Natural killer cell (primary cell): ENCODE measurements at regions of chr14 and their contacts with region 1.

Region 1: DNA sequence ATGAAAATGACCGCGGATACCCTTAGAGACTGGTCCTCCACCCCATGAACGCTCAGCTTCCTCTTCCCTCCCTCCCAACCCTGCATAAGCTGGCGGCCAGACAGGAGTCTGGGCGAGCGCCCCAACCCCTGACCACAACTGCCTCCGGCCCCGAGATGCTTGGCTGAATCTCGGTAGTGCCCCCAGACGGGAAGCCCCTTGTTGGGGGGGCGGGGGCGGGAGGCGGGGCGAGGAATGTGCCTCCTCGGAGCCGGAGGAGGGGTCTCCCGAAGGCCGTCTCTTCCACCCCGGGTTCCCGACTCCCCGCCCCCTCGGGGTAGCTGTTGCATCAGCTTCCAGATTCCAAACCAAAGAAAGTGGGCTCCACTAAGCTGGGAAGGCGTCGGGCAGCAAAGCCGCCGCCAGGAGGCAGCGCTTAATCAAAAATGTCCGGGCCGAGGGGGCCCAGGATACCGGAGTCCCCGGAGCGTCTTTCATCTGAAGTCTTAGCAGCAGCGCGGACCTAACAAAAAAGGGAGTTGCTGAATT is 7.1 kb upstream of the MRPL52 start:
- DNase-seq: peak; percentile 52 to 85
- ATAC-seq: peak; percentile 81 to 90 (median 87)
- H3K4me3 ChIP-seq: peak overlapping the region; percentile 21
- H3K4me3 Mint-ChIP-seq: peak overlapping the region; percentile 59
- H3K27ac ChIP-seq: peak overlapping the region; percentile 32
- H3K27ac Mint-ChIP-seq: no peak overlapping the region
- H3K4me1 ChIP-seq: peaks cover 17% of the 10 kb centered on the region
- H3K4me1 Mint-ChIP-seq: peaks cover 7 to 14% of the 10 kb centered on the region in 2 donors
- H3K27me3 ChIP-seq: peaks cover 9% of the 10 kb centered on the region
- H3K27me3 Mint-ChIP-seq: peaks cover 32 to 47% of the 10 kb centered on the region in 2 donors
- CTCF ChIP-seq: peak; percentile 72

Region 2: DNA sequence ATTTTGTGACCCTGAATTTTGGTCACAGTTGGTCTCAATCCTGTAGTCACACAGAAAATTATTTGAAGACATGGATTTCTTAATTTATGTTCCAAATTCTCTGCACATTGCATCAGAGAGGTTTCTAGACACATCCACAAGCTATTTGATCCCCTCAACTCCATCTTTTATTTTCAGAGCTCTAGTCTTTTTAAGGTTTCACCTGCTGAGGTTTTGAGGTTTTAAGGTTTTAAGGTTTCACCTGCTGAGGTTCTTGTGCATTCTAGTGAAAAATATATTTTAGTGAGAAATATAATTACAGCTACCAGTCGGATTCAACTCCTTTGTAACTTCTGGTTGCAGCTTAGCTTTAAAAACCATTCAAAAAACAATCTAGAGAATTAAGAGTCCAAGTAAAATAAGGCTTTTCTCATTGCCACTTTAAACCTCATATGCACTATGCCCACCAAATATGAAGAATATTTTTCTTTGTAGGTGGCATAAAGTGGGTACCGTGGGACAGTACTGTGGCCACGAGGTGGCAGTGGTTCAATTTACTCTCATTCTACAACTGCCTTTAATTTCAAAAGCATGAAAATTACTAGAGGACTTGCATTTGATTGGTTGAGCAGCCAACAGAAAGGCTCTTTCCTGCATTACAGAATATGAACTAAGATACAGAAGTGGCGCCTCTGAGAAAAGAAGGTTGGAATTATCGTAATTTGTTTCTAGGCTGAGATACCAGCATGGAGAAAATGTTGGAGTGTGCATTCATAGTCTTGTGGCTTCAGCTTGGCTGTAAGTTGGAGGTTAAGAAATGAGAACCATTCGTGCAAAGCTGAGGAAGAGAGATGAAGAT is 782.5 kb before region 1 on chr14:
- intact Hi-C with region 1: no loop called
- DNase-seq: peak in 1 of 2 donors; percentile 71
- ATAC-seq: peak; percentile 34 to 77 (median 68)
- H3K4me3 ChIP-seq: no peak overlapping the region
- H3K4me3 Mint-ChIP-seq: peak overlapping the region; percentile 4
- H3K27ac ChIP-seq: no peak overlapping the region
- H3K27ac Mint-ChIP-seq: no peak overlapping the region
- H3K4me1 ChIP-seq: no peaks in the 10 kb centered on the region
- H3K4me1 Mint-ChIP-seq: no peaks in the 10 kb centered on the region
- H3K27me3 ChIP-seq: peaks cover 1% of the 10 kb centered on the region
- H3K27me3 Mint-ChIP-seq: peaks cover 21 to 59% of the 10 kb centered on the region in 2 donors
- CTCF ChIP-seq: peak; percentile 61

Region 3: GRCh38 chr14:22753586-22753985 is 69.0 kb before region 1 on chr14:
- intact Hi-C with region 1: no loop called
- DNase-seq: no peak
- ATAC-seq: no peak
- H3K4me3 ChIP-seq: no peak overlapping the region
- H3K4me3 Mint-ChIP-seq: no peak overlapping the region
- H3K27ac ChIP-seq: no peak overlapping the region
- H3K27ac Mint-ChIP-seq: no peak overlapping the region
- H3K4me1 ChIP-seq: no peaks in the 10 kb centered on the region
- H3K4me1 Mint-ChIP-seq: peaks cover 0 to 2% of the 10 kb centered on the region in 2 donors
- H3K27me3 ChIP-seq: no peaks in the 10 kb centered on the region
- H3K27me3 Mint-ChIP-seq: peaks cover 10 to 12% of the 10 kb centered on the region in 2 donors
- CTCF ChIP-seq: no peak

Region 4: DNA sequence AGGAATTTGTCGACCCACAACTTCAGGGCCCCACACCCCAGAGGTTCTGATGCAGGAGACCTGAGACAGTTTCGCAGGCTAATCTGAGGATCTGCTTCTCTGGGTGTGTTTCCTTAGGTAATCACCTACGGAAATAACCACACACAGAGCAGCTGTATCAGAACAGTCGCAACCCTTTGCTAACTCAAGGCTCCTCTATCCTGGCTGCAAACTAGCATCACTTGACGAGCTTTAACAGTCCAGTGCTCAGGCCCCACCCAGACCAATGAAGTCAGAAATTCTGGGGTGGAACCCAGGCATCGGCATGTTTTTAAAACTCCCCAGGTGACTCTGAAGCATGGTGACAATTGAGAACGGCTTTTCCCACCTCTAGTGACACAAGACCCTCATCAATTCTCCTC is 28.1 kb before region 1 on chr14:
- intact Hi-C with region 1: no loop called
- DNase-seq: no peak
- ATAC-seq: no peak
- H3K4me3 ChIP-seq: no peak overlapping the region
- H3K4me3 Mint-ChIP-seq: no peak overlapping the region
- H3K27ac ChIP-seq: peak overlapping the region; percentile 68
- H3K27ac Mint-ChIP-seq: no peak overlapping the region
- H3K4me1 ChIP-seq: peaks cover 4% of the 10 kb centered on the region
- H3K4me1 Mint-ChIP-seq: no peaks in the 10 kb centered on the region
- H3K27me3 ChIP-seq: no peaks in the 10 kb centered on the region
- H3K27me3 Mint-ChIP-seq: peaks cover 20 to 30% of the 10 kb centered on the region in 2 donors
- CTCF ChIP-seq: no peak

Region 5: GRCh38 chr14:22852940-22853767 is 30.5 kb after region 1 on chr14:
- intact Hi-C with region 1: loop called (anchors 1 kb)
- DNase-seq: peak; percentile 89 to 90
- ATAC-seq: peak; percentile 93 to 95 (median 94)
- H3K4me3 ChIP-seq: peak overlapping the region; percentile 45
- H3K4me3 Mint-ChIP-seq: peak overlapping the region; percentile 75
- H3K27ac ChIP-seq: no peak overlapping the region
- H3K27ac Mint-ChIP-seq: peak overlapping the region in 1 of 2 donors; percentile 78
- H3K4me1 ChIP-seq: peaks cover 21% of the 10 kb centered on the region
- H3K4me1 Mint-ChIP-seq: peaks cover 4 to 9% of the 10 kb centered on the region in 2 donors
- H3K27me3 ChIP-seq: peaks cover 29% of the 10 kb centered on the region
- H3K27me3 Mint-ChIP-seq: peaks cover 24 to 29% of the 10 kb centered on the region in 2 donors
- CTCF ChIP-seq: peak; percentile 97

Region 6: DNA sequence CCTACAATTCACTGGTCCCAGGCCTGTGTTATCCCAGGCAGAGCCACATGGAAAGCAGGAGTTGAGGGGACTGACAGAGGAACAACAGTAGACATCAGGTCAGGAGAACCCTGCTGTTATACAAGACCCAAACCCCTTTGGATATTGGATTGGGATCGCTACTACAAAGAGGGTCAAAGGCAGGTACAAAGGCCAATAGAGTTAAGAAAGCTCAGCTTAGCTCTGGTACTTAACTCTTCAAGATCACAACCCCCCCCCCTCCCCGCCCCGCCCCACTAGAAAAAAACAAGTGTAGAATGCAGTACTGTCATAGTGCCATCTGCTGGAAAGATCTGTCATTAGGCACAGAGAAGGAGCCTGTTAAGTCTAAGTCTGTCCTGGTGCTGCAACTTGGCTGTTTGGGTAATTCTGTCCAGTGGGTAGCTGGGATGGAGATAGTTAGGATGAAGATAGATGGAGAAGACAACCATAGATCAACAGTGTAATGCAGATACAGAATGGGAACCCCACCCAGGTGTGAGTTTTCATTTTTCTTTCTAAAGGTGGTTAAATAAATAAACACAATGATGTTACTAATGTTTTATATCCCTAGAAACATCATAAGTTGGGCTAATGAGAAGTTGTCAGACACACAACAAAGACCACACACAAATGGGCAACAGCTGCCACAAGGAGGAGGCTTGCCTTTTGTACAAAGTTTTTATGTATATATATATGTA is 77.6 kb after region 1 on chr14:
- intact Hi-C with region 1: loop called (anchors 2 kb)
- DNase-seq: peak in 1 of 2 donors; percentile 86
- ATAC-seq: peak; percentile 67 to 90 (median 82)
- H3K4me3 ChIP-seq: no peak overlapping the region
- H3K4me3 Mint-ChIP-seq: no peak overlapping the region
- H3K27ac ChIP-seq: no peak overlapping the region
- H3K27ac Mint-ChIP-seq: peak overlapping the region in 1 of 2 donors; percentile 6
- H3K4me1 ChIP-seq: no peaks in the 10 kb centered on the region
- H3K4me1 Mint-ChIP-seq: peaks cover 0 to 15% of the 10 kb centered on the region in 2 donors
- H3K27me3 ChIP-seq: no peaks in the 10 kb centered on the region
- H3K27me3 Mint-ChIP-seq: no peaks in the 10 kb centered on the region
- CTCF ChIP-seq: peak; percentile 65

Region 7: DNA sequence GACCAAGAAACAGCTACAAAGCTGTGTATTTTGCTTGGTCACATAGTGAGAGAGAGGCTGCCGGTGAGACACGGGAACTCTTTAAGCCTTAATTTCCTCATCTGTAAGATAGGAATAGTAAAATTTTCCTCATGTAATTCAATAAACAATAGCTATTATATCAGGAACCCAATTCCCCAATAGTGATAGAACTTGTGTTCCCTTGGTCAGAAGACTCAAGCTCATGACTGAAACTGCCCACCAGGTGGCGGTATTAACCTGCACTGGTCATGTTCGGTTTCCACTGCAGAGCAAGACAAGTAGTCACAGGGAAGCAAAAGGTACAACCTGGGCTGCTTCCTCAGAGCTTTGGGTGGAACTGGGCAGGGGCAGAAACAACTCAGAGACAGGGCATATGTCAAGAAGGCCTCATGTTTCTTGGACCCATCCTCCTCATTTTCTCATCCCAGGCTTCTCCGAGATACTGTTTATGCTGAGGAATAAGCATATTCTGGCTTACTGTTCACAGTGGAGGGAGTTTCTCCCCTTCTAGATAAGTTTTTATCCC is 163.9 kb after region 1 on chr14:
- intact Hi-C with region 1: loop called (anchors 5 kb)
- DNase-seq: peak; percentile 78 to 95
- ATAC-seq: peak; percentile 70 to 82 (median 70)
- H3K4me3 ChIP-seq: no peak overlapping the region
- H3K4me3 Mint-ChIP-seq: no peak overlapping the region
- H3K27ac ChIP-seq: no peak overlapping the region
- H3K27ac Mint-ChIP-seq: no peak overlapping the region
- H3K4me1 ChIP-seq: peaks cover 15% of the 10 kb centered on the region
- H3K4me1 Mint-ChIP-seq: no peaks in the 10 kb centered on the region
- H3K27me3 ChIP-seq: peaks cover 7% of the 10 kb centered on the region
- H3K27me3 Mint-ChIP-seq: no peaks in the 10 kb centered on the region
- CTCF ChIP-seq: peak; percentile 83